GM13977 (cell line): ENCODE measurements at regions of chr11 and their contacts with region 1.

Region 1: DNA sequence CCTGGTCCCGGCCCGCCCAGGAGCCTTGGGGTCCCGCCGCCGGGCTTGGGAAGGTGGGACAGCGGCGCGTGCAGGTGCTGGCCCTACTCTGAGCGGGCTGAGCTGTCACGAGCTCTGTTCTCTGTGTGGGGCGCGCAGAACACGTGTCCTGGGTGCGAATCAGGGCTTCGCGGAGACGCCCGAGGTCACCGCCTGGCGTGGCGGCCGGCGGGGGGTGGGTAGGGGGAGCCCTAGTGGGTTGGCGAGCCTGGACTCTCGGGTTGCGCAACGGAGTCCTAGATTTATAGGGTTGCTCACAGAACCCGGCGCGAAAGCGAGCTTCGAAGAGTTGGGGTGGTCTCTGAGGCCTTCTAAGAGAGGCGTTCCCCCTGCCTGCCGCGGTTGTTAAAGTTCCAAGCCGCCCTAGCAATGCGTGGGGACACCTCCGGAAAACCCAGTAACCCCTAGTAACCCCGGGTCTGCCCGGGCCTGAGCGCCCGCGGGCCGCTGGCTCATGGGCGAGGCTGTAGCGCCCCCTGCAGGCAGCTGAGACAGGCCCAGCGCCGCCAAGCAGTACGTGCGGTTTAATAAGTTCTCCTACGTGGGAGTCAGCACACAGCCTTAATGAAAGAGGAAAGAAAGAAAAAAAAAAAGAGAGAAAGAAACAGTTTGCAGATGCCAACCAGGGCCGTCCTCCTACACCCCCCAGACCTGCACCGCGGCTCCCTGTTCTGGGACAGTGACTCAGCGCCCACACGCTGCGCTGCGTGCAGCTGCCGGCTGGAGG is 2.8 kb downstream of the ADM start:
- DNase-seq: peak; percentile 84
- CTCF ChIP-seq: peak; percentile 96

Region 2: DNA sequence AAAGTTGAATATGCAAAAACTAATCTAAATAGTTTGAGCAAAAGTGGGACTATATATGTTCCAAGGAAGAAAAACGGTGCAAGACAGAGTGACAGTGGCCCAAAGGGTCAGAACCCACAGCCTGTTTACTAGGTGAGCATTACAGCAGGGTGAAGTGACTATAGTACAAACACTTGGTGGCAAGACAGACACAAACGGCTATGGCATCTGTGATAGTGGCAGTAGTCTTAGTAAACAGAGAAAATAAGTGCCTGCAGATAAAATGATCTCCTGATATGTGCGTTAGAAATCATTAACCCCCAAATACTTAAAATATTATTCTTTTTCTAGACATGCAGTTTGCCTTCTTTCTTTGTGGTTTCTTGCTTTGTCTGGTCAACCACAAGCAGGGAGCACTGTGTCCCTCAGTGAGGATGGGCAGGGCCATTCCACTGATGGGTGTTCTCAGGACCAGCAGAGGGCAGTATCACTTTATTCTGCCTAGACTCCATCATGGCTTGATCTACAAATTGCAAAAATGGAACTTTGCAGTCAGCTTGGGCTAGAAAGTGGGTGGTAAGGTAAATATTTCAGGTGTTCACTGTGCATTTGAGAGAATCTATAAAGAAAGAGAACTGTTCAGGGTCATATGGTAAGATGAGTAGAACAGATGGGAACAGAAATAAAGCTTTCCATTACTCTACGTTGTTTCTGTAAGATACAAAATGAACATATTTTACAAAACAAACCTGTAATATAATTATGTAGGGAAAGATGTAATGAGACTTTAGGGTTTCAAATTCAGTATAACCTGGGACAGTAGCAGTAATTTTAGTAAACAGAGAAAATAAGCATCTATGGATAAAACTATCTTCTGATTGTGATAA is 445.5 kb before region 1 on chr11:
- in situ Hi-C with region 1: loop called (anchors 25 kb)
- DNase-seq: peak; percentile 59
- CTCF ChIP-seq: peak; percentile 87

Region 3: GRCh38 chr11:9982800-9983579 is 324.6 kb before region 1 on chr11:
- in situ Hi-C with region 1: loop called (anchors 25 kb)
- DNase-seq: no peak
- CTCF ChIP-seq: no peak

Region 4: GRCh38 chr11:10653926-10654810 is 346.5 kb after region 1 on chr11:
- in situ Hi-C with region 1: no loop called
- DNase-seq: peak; percentile 75
- CTCF ChIP-seq: peak; percentile 68